ENCODE measurements at regions of chr1 and their contacts with region 1.

Region 1: GRCh38 chr1:164602480-164603093 is 43.6 kb downstream of the PBX1 start:
- DNase-seq: peak; percentile 70
- ATAC-seq: peak; percentile 34
- H3K4me3 Mint-ChIP-seq: peak overlapping the region; percentile 64
- H3K27ac Mint-ChIP-seq: peak overlapping the region; percentile 100
- H3K4me1 Mint-ChIP-seq: peaks cover 92% of the 10 kb centered on the region
- H3K27me3 Mint-ChIP-seq: no peaks in the 10 kb centered on the region
- CTCF ChIP-seq: no peak

Region 2: DNA sequence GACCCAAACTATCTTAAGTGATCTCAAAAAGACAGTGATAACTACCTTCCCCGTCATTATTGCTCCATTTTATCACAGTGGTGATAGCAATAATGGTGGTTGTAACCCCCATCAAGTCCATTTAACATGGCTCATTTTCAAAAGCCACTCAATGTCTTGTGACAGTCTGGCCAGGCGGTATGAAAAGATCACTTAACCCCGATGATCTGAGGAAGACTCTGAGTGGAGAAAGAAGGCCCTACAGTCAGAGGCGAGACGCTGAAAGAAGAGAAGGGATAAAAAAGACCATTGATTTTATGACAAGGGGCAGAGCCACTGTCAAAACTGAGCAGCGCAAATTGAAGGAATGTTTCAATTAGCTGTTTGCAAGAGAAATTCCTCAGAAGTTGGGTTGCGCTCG is 460.8 kb before region 1 on chr1:
- CTCF ChIA-PET with region 1: no interaction called
- POLR2A ChIA-PET with region 1: no interaction called
- DNase-seq: no peak
- ATAC-seq: no peak
- H3K4me3 Mint-ChIP-seq: no peak overlapping the region
- H3K27ac Mint-ChIP-seq: no peak overlapping the region
- H3K4me1 Mint-ChIP-seq: no peaks in the 10 kb centered on the region
- H3K27me3 Mint-ChIP-seq: peaks cover 2% of the 10 kb centered on the region; the same call in 1 of the 2 replicates
- CTCF ChIP-seq: no peak

Region 3: GRCh38 chr1:164240083-164240482 is 362.5 kb before region 1 on chr1:
- CTCF ChIA-PET with region 1: interaction called, 11 read pairs
- POLR2A ChIA-PET with region 1: no interaction called
- DNase-seq: peak; percentile 38
- ATAC-seq: peak; percentile 91
- H3K4me3 Mint-ChIP-seq: no peak overlapping the region
- H3K27ac Mint-ChIP-seq: no peak overlapping the region
- H3K4me1 Mint-ChIP-seq: peaks cover 2% of the 10 kb centered on the region
- H3K27me3 Mint-ChIP-seq: no peaks in the 10 kb centered on the region
- CTCF ChIP-seq: no peak

Region 4: GRCh38 chr1:164588516-164589341 is 13.9 kb before region 1 on chr1:
- CTCF ChIA-PET with region 1: interaction called, 12 read pairs
- POLR2A ChIA-PET with region 1: interaction called, 4 read pairs
- DNase-seq: peak; percentile 66
- ATAC-seq: peak; percentile 51
- H3K4me3 Mint-ChIP-seq: peak overlapping the region; percentile 64
- H3K27ac Mint-ChIP-seq: peak overlapping the region; percentile 99
- H3K4me1 Mint-ChIP-seq: peaks cover 99% of the 10 kb centered on the region
- H3K27me3 Mint-ChIP-seq: no peaks in the 10 kb centered on the region
- CTCF ChIP-seq: no peak

Region 5: GRCh38 chr1:164617377-164618201 is 15.0 kb after region 1 on chr1:
- CTCF ChIA-PET with region 1: interaction called, 16 read pairs
- POLR2A ChIA-PET with region 1: interaction called, 6 read pairs
- DNase-seq: peak; percentile 71
- ATAC-seq: peak; percentile 55
- H3K4me3 Mint-ChIP-seq: no peak overlapping the region
- H3K27ac Mint-ChIP-seq: no peak overlapping the region
- H3K4me1 Mint-ChIP-seq: peaks cover 56% of the 10 kb centered on the region
- H3K27me3 Mint-ChIP-seq: no peaks in the 10 kb centered on the region
- CTCF ChIP-seq: 0 out of 2 replicates have a peak, but pooled peaks have one; percentile 42

Region 6: GRCh38 chr1:164695956-164696665 is 93.5 kb after region 1 on chr1:
- CTCF ChIA-PET with region 1: no interaction called
- POLR2A ChIA-PET with region 1: no interaction called
- DNase-seq: no peak
- ATAC-seq: no peak
- H3K4me3 Mint-ChIP-seq: no peak overlapping the region
- H3K27ac Mint-ChIP-seq: no peak overlapping the region
- H3K4me1 Mint-ChIP-seq: peaks cover 31% of the 10 kb centered on the region
- H3K27me3 Mint-ChIP-seq: no peaks in the 10 kb centered on the region
- CTCF ChIP-seq: no peak

Measured in WTC11 (cell line).